Colonic mucosa (tissue), 4 donors: ENCODE measurements at regions of chr2 and their contacts with region 1.

Region 1: DNA sequence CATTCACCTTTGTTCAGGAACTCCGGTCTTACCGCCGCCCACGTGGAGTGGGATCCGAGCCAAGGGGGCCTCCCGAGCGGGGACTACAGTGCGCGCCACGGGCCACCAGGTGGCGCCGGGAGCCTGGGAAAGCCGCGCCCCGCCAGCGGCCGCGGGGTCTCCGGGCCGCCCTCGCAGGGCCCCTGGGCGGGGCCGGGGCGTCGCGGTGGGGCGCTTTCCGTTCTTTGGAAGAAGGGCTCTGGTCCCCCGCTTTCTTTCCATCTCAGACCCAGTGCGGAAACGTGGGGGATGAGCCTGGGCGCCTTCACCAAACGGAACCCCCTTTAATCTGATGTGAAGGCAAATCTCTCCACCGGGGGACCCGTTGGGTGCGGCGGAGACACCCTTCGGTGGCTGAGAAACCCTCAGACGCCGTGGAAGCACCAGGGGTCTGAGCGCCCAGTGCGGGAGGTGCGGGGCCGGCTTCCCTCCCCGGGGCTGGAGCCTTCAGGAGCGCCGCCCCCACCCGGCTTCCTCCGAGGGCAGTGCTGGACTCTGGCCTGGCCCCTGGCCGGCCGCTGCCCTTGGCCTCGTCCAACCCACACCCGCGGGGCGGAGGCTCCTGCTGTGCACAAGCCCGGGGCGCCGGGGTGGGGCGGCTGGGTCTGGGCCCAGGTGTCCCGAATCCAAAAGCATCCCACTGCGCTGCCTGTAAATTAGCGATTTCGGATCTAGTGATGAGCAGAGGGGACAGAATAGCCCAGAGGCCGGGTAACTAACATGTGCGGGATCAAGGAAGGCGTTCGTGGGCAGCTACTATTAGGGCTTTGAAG is 44.6 kb downstream of the GORASP2 start:
- DNase-seq: peak; percentile 88
- H3K4me3 ChIP-seq: peak overlapping the region; percentile 72
- H3K27ac ChIP-seq: peak overlapping the region; percentile 47
- H3K4me1 ChIP-seq: peaks cover 3% of the 10 kb centered on the region
- H3K27me3 ChIP-seq: no peaks in the 10 kb centered on the region
- CTCF ChIP-seq: peak; percentile 91

Region 2: GRCh38 chr2:171160119-171160955 is 186.6 kb after region 1 on chr2 and contains the start of gene TLK1:
- intact Hi-C with region 1: loop called (anchors 5 kb)
- DNase-seq: peak; percentile 71
- H3K4me3 ChIP-seq: peak within 1 kb of the TSS; percentile 68
- H3K27ac ChIP-seq: peak within 1 kb of the TSS; percentile 92
- H3K4me1 ChIP-seq: no peaks in the 10 kb centered on the region
- H3K27me3 ChIP-seq: no peaks in the 10 kb centered on the region
- CTCF ChIP-seq: no peak
- total RNA-seq, gene TLK1: 69.5 to 82.8 TPM

Region 3: DNA sequence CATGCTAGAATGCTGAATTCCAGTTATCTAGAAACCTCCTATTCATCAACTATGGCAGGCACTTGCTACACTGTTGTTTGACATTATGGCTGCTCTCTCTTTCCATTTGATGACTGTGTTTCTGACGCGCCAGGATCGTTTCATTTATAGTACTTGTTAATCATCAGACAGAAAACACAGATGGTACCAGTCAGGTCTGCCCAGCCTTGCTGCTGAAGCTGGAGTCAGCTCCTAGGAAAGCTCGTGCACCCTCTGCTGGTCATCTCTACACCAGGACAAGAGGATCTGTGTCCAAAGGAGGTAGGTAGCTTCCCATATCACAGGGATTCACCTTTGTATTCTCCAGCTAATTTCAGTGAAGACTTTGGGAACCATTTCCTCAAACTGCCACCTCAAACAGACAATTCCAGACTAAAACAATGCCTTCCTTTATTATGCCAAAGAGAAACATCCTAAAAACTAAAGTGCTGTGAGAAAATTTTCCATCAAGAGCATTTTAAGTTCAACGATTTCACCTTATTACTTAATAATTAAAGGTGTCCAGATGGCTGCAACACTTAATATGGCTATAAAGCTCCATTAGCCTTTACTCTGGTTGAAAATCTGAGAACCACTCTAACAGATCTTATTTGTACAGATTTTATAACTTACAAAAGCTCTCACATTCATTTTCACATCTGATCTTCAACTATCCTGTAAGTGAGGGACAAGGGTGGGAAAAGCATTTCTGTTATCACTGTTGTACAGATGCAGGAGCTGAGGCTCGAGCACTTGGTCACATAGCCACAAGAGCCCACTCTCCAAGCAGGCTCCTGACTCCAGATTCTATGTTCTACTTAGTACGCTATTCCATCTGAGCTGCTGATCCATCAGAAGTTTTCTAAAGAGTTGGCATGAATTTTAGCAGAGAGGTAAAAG is 442.6 kb after region 1 on chr2:
- intact Hi-C with region 1: loop called (anchors 2 kb)
- DNase-seq: peak; percentile 92
- H3K4me3 ChIP-seq: no peak overlapping the region
- H3K27ac ChIP-seq: no peak overlapping the region
- H3K4me1 ChIP-seq: no peaks in the 10 kb centered on the region
- H3K27me3 ChIP-seq: no peaks in the 10 kb centered on the region
- CTCF ChIP-seq: peak; percentile 77